ENCODE measurements at regions of chr1 and their contacts with region 1.

Region 1: GRCh38 chr1:6157528-6158174 is 22.5 kb downstream of the CHD5 start:
- DNase-seq: peak; percentile 100
- ATAC-seq: peak; percentile 88
- H3K4me3 ChIP-seq: peak overlapping the region; percentile 32; the same call in 1 of the 2 replicates
- H3K27ac ChIP-seq: peak overlapping the region; percentile 97
- H3K4me1 ChIP-seq: peaks cover 27% of the 10 kb centered on the region
- H3K27me3 ChIP-seq: no peaks in the 10 kb centered on the region
- CTCF ChIP-seq: no peak

Region 2: GRCh38 chr1:6052543-6053205 is 105.0 kb before region 1 on chr1:
- CTCF ChIA-PET with region 1: no interaction called
- POLR2A ChIA-PET with region 1: no interaction called
- intact Hi-C with region 1: loop called (anchors 5 kb)
- DNase-seq: peak; percentile 86
- ATAC-seq: peak; percentile 80
- H3K4me3 ChIP-seq: no peak overlapping the region
- H3K27ac ChIP-seq: no peak overlapping the region
- H3K4me1 ChIP-seq: no peaks in the 10 kb centered on the region
- H3K27me3 ChIP-seq: no peaks in the 10 kb centered on the region
- CTCF ChIP-seq: peak; percentile 94

Region 3: GRCh38 chr1:6082430-6082971 is 75.2 kb before region 1 on chr1:
- CTCF ChIA-PET with region 1: no interaction called
- POLR2A ChIA-PET with region 1: no interaction called
- intact Hi-C with region 1: no loop called
- DNase-seq: peak; percentile 35
- ATAC-seq: peak; percentile 72
- H3K4me3 ChIP-seq: no peak overlapping the region
- H3K27ac ChIP-seq: no peak overlapping the region
- H3K4me1 ChIP-seq: no peaks in the 10 kb centered on the region
- H3K27me3 ChIP-seq: no peaks in the 10 kb centered on the region
- CTCF ChIP-seq: peak; percentile 64

Region 4: DNA sequence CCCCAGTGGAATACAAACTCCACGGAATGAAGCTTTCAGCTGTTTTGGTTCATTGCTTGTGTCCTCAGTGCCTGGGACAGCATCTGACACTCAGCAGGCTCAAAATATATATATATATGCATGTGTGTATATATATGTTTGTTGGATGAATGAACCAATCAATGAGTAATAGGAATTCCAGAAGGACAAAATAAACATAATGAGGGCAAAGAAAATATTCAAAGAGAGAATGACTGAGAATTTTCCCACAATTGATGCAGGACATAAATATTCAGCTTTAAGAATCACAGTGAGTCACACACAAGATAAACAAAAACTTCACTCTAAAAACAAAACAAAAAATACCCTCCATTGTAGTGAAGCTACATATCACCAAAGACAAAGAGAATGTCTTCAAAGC is 41.5 kb before region 1 on chr1:
- CTCF ChIA-PET with region 1: no interaction called
- POLR2A ChIA-PET with region 1: no interaction called
- intact Hi-C with region 1: loop called (anchors 1 kb)
- DNase-seq: peak; percentile 91
- ATAC-seq: peak; percentile 93
- H3K4me3 ChIP-seq: no peak overlapping the region
- H3K27ac ChIP-seq: peak overlapping the region; percentile 74
- H3K4me1 ChIP-seq: peaks cover 17% of the 10 kb centered on the region
- H3K27me3 ChIP-seq: no peaks in the 10 kb centered on the region
- CTCF ChIP-seq: no peak

Measured in PC-3 (cell line).